ENCODE measurements at regions of chr15 and their contacts with region 1.

Region 1: DNA sequence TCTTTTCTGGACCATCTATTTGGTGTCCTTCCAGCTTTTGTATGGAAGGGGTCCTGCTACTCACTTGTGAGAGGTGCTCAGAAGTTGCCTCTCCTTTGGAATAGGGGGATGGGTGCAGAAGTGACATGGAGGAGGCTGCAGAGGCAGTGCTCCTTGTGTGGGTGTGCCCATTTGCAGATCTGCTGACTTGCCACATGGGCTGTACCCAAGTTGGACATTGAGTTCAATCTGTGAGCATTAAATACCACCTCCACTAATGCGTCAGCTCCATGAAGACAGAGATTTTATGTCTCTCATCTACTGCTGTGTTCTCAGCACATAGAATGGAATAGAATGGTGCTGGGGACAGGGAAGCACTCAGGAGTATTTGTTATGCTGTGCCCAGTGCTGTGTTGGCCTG is 76.2 kb downstream of the RGMA start:
- DNase-seq: no peak
- ATAC-seq: no peak

Region 2: GRCh38 chr15:92942706-92943105 is 70.1 kb before region 1 on chr15:
- intact Hi-C with region 1: loop called (anchors 5 kb)
- DNase-seq: no peak
- ATAC-seq: no peak